ENCODE measurements at regions of chr19 and their contacts with region 1.

Region 1: DNA sequence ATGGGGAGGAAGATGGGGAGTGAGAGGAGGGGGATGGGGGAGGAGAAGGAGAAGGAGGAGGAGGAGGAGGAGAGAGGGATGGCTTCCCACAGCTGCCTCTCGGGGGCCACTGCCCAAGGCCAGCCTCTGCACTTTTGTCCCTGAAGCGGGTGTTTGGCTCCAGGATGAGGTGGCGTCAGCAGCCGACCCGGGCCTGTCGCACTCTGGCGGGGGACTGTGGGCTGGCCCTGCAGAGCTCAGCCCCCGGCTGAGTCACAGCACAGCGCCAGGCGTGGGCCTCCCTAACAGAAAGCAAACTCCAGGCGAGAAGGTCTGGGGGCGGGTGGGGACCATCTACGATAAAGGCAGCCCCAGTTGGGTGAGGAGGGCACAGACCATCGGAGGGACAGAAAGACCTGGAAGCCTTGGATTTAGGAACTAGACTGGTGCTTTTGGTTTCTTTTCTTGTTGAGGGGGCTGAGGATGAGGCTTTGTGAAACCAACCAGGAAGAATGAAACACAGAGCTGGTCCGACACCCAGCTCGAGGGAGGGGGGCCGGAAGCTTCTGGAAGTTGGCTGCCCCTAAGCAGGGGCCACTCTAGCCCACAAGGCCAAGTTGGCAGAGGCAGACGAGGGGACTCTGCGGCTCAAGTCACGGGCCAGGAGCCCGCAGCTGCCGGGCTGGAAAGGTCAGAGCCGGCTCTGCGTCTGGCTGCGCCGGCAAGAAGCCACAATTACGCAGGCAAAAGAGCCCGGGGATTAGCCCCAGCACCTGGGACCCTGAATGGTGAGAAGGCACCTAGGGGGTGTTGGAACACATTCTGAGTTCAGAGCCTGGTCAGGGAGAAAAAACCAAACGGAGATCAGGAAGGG is 18.2 kb downstream of the LSM4 start:
- DNase-seq: peak; percentile 87
- H3K4me3 Mint-ChIP-seq: peak overlapping the region; percentile 94
- H3K27ac Mint-ChIP-seq: peak overlapping the region; percentile 99
- H3K4me1 Mint-ChIP-seq: peaks cover 50% of the 10 kb centered on the region
- H3K27me3 Mint-ChIP-seq: no peaks in the 10 kb centered on the region

Region 2: GRCh38 chr19:18291590-18292461 is 12.9 kb before region 1 on chr19:
- CTCF ChIA-PET with region 1: interaction called, 14 read pairs
- DNase-seq: peak; percentile 91
- H3K4me3 Mint-ChIP-seq: peak overlapping the region; percentile 89
- H3K27ac Mint-ChIP-seq: peak overlapping the region; percentile 96
- H3K4me1 Mint-ChIP-seq: peaks cover 77% of the 10 kb centered on the region
- H3K27me3 Mint-ChIP-seq: no peaks in the 10 kb centered on the region

Region 3: DNA sequence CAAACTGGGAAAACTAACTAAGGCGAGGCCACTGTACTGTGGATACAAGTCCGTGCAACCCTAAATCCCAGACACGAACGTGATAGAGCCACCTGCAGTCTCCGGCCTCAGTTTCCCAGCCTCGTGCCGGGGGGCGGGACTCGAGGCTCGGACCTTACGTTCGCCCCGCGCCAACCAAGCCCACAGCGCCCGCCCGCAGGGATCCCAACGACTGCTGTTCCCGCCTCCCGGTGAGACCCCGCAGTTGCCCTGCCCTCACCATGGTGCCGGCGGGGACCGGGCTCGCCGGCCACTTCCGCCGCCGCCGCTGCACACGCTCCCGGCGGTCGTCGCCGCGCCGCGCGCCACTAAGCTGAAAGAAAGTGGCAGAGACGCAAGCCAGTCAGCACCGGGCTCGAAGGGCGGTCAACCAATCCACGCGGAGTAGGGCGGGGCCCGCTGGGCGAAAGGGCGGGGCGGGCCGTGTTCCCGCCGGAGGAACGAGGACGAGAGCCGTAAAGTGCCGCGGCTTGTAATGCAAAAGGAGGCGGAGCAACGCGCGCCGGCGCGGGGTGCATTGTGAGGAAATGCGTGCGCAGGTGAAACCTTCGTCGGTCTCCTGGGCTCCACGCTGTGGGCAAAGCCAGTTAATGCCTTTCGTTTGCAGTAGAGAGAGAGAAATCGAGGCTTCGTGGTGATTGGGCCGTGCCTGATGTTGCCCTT is 18.2 kb after region 1 on chr19 and contains the start of gene LSM4:
- CTCF ChIA-PET with region 1: interaction called, 19 read pairs
- DNase-seq: peak; percentile 100
- H3K4me3 Mint-ChIP-seq: peak within 1 kb of the TSS; percentile 89
- H3K27ac Mint-ChIP-seq: peak within 1 kb of the TSS; percentile 96
- H3K4me1 Mint-ChIP-seq: peaks cover 54% of the 10 kb centered on the region
- H3K27me3 Mint-ChIP-seq: no peaks in the 10 kb centered on the region

Measured in activated naive CD4-positive, alpha-beta T cell treated with anti-CD3 and anti-CD28 coated beads, Interleukin-2, amount 10 ng/mL, durations not matched to agents 7 days and 5 days (primary cell).